ENCODE measurements at regions of chr17 and their contacts with region 1.

Region 1: DNA sequence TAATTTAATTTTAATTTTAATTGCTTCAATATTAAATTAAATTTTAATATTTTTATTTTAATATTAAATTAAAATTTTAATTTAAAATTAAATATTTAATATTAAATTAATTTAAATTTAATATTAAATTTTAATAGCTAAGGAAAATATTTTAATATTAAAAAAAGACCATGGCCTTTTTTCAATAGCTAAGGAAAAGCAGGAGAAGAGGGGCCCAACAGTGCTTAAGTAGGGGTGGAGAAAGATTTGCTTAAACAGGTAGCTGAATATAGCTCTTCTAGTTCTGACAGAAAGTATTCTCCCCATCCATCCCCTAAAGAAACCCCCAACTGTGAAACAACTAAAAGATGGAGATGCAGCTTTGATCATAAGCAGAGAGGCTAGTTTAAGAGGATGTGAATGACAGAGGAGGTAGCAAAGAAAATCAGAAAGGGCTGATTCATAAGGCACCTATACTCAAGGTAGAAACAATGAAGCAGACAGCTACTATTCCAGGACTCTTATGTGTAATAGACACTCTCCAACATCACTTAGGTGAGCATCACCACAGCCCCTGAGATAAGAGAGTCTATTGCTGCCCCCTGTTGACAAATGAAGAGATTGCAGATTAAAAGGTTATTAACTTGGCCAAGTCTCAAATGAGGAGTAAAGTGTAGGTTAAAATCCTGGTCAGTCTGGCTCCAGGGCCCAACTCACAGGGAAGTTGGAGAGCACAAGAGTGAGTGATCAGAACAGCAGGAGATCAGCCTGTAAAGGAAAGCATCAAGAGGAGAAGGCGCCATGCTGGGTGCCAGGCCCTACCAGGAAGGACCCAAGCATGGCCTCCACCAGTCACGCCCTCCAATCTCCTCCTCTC is 7.8 kb upstream of the RNASEK start:
- DNase-seq: peak; percentile 51 to 62
- H3K4me3 ChIP-seq: no peak overlapping the region
- H3K4me1 ChIP-seq: no peaks in the 10 kb centered on the region
- H3K27me3 ChIP-seq: no peaks in the 10 kb centered on the region

Region 2: DNA sequence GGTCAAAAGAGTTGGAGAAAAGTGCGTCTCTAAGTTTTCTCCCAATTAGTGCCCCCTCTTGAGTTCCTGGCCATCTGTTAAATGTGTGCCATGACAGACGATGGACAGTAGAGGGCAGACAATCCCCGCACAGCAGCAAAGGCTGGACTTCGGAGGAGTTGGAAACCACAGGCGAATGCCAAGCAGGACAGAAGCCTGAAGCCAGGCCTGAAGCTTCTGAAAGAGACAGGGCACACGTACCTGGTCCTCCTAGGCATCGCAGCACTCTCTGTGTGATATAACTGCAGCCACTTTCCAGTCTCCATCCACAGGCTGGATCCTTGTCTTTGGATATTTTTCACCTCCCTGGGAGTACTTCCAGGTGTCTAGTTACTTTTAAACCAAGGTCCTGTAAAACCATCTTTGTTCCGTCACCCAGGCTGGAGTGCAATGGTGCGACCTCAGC is 338.5 kb before region 1 on chr17:
- in situ Hi-C with region 1: loop called (anchors 10 kb)
- DNase-seq: peak; percentile 66 to 79
- H3K4me3 ChIP-seq: no peak overlapping the region
- H3K4me1 ChIP-seq: no peaks in the 10 kb centered on the region
- H3K27me3 ChIP-seq: peaks cover 11% of the 10 kb centered on the region

Region 3: GRCh38 chr17:6913608-6914443 is 90.8 kb before region 1 on chr17:
- in situ Hi-C with region 1: loop called (anchors 5 kb)
- DNase-seq: peak; percentile 42 to 90
- H3K4me3 ChIP-seq: no peak overlapping the region
- H3K4me1 ChIP-seq: no peaks in the 10 kb centered on the region
- H3K27me3 ChIP-seq: peaks cover 31% of the 10 kb centered on the region

Measured in HAP-1 (cell line).